CD4-positive, alpha-beta T cell (primary cell): ENCODE measurements at regions of chr6 and their contacts with region 1.

Region 1: GRCh38 chr6:134938896-134939295 is 11.0 kb downstream of the ALDH8A1 start:
- DNase-seq: peak in 9 of 14 experiments; percentile 2 to 74 (median 17)
- ATAC-seq: peak; percentile 91
- H3K4me3 ChIP-seq: no peak overlapping the region
- H3K4me3 Mint-ChIP-seq: no peak overlapping the region
- H3K27ac ChIP-seq: no peak overlapping the region
- H3K27ac Mint-ChIP-seq: no peak overlapping the region
- H3K4me1 ChIP-seq: peaks cover 6% of the 10 kb centered on the region
- H3K4me1 Mint-ChIP-seq: peaks cover 12% of the 10 kb centered on the region
- H3K27me3 ChIP-seq: no peaks in the 10 kb centered on the region
- H3K27me3 Mint-ChIP-seq: no peaks in the 10 kb centered on the region
- CTCF ChIP-seq: no peak

Region 2: DNA sequence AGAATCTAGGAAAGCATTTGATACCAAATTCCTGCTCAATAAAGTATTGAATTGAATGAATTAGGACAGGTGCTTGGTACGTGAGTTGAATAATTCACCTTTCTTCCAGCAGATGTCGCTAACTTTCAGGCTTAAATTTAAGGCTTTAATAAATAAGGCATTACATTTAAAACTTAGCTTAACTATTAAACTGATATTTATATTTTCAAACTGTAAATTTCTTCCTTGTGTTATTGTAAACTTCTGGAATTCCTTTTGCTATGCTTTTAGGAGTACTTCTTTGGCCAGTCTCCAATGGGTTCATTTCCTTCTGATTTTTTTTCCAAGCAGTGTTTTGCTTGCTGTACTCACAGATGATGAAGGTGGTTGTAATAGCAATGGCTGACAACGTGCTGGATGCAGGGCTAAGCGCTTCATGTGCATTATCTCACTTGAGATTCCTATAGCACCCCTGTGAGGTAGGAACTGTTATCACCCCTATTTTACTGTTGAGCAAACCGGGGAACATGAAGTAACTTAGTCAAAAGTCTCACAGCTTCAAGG is 815.2 kb before region 1 on chr6:
- CTCF ChIA-PET with region 1: interaction called, 7 read pairs
- POLR2A ChIA-PET with region 1: interaction called, 4 read pairs
- intact Hi-C with region 1: loop called in 1 of 2 experiments (anchors 5 kb)
- DNase-seq: peak in 8 of 14 experiments; percentile 8 to 72 (median 40)
- ATAC-seq: peak; percentile 100
- H3K4me3 ChIP-seq: no peak overlapping the region
- H3K4me3 Mint-ChIP-seq: no peak overlapping the region
- H3K27ac ChIP-seq: no peak overlapping the region
- H3K27ac Mint-ChIP-seq: peak overlapping the region; percentile 51
- H3K4me1 ChIP-seq: no peaks in the 10 kb centered on the region
- H3K4me1 Mint-ChIP-seq: peaks cover 6% of the 10 kb centered on the region
- H3K27me3 ChIP-seq: no peaks in the 10 kb centered on the region
- H3K27me3 Mint-ChIP-seq: no peaks in the 10 kb centered on the region
- CTCF ChIP-seq: peak; percentile 86

Region 3: GRCh38 chr6:134822920-134823709 is 115.8 kb before region 1 on chr6:
- CTCF ChIA-PET with region 1: interaction called, 5 read pairs
- POLR2A ChIA-PET with region 1: no interaction called
- intact Hi-C with region 1: loop called (anchors 5 kb)
- DNase-seq: peak in 6 of 14 experiments; percentile 3 to 81 (median 53)
- ATAC-seq: peak; percentile 74
- H3K4me3 ChIP-seq: no peak overlapping the region
- H3K4me3 Mint-ChIP-seq: no peak overlapping the region
- H3K27ac ChIP-seq: no peak overlapping the region
- H3K27ac Mint-ChIP-seq: no peak overlapping the region
- H3K4me1 ChIP-seq: no peaks in the 10 kb centered on the region
- H3K4me1 Mint-ChIP-seq: no peaks in the 10 kb centered on the region
- H3K27me3 ChIP-seq: no peaks in the 10 kb centered on the region
- H3K27me3 Mint-ChIP-seq: no peaks in the 10 kb centered on the region
- CTCF ChIP-seq: peak; percentile 72

Region 4: GRCh38 chr6:134882426-134883038 is 56.4 kb before region 1 on chr6:
- CTCF ChIA-PET with region 1: no interaction called
- POLR2A ChIA-PET with region 1: no interaction called
- intact Hi-C with region 1: no loop called
- DNase-seq: peak; percentile 11 to 74 (median 43)
- ATAC-seq: peak; percentile 65
- H3K4me3 ChIP-seq: no peak overlapping the region
- H3K4me3 Mint-ChIP-seq: no peak overlapping the region
- H3K27ac ChIP-seq: no peak overlapping the region
- H3K27ac Mint-ChIP-seq: no peak overlapping the region
- H3K4me1 ChIP-seq: no peaks in the 10 kb centered on the region
- H3K4me1 Mint-ChIP-seq: no peaks in the 10 kb centered on the region
- H3K27me3 ChIP-seq: peaks cover 0 to 4% of the 10 kb centered on the region in 2 experiments
- H3K27me3 Mint-ChIP-seq: peaks cover 19% of the 10 kb centered on the region
- CTCF ChIP-seq: peak; percentile 83

Region 5: DNA sequence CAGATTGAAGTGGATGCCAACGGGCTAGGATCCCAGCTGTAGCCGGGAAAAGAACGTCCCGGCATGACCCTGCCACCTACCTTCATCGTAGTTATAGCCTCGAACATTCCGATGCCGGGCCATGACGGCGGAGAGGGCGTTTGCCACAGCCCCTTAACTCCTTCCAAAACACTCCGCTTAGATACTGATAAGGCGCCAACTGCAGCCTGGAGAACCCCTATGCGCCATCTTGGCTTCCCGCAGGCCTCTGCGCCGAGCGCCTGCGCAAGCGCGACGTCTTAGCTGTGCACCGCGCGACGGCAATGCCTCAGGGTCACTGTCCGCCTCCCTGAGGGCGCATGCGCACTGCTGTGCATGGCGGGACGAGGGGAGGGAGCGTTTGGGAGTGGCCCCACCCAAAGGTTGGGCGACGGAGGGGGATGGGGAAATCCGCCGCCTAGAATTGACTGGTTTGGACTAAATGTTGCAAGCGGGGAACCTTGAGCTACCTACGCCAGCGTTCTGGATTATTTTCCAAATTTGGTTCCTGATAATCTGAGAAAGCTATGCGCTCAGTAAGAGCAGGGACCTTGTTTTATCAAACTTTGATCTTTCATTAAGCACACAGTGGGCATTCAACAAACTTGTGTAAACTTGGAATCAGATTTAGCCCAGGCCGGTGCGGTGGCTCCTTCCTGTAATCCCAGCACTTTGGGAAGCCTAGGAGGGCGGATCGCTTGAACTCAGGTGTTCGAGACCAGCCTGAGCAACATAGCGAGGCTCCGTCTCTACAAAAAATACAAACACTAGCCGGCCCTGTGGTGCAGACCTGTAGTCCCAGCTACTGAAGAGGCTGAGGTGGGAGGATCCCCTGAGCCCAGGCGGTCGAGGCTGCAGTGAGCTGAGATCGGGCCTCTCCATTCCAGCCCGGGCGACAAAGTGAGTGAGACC is 115.9 kb after region 1 on chr6 and contains the start of gene HBS1L:
- CTCF ChIA-PET with region 1: no interaction called
- POLR2A ChIA-PET with region 1: no interaction called
- intact Hi-C with region 1: no loop called
- DNase-seq: peak; percentile 92 to 100 (median 96)
- ATAC-seq: peak; percentile 96
- H3K4me3 ChIP-seq: peak within 1 kb of the TSS; percentile 86
- H3K4me3 Mint-ChIP-seq: peak within 1 kb of the TSS; percentile 96
- H3K27ac ChIP-seq: peak within 1 kb of the TSS; percentile 90 to 94
- H3K27ac Mint-ChIP-seq: peak within 1 kb of the TSS; percentile 99
- H3K4me1 ChIP-seq: peaks cover 16% of the 10 kb centered on the region
- H3K4me1 Mint-ChIP-seq: peaks cover 46% of the 10 kb centered on the region
- H3K27me3 ChIP-seq: no peaks in the 10 kb centered on the region
- H3K27me3 Mint-ChIP-seq: no peaks in the 10 kb centered on the region
- CTCF ChIP-seq: no peak
- total RNA-seq, gene HBS1L: 106 to 117 TPM